Prostate gland (tissue), 2 donors: ENCODE measurements at regions of chr10 and their contacts with region 1.

Region 1: DNA sequence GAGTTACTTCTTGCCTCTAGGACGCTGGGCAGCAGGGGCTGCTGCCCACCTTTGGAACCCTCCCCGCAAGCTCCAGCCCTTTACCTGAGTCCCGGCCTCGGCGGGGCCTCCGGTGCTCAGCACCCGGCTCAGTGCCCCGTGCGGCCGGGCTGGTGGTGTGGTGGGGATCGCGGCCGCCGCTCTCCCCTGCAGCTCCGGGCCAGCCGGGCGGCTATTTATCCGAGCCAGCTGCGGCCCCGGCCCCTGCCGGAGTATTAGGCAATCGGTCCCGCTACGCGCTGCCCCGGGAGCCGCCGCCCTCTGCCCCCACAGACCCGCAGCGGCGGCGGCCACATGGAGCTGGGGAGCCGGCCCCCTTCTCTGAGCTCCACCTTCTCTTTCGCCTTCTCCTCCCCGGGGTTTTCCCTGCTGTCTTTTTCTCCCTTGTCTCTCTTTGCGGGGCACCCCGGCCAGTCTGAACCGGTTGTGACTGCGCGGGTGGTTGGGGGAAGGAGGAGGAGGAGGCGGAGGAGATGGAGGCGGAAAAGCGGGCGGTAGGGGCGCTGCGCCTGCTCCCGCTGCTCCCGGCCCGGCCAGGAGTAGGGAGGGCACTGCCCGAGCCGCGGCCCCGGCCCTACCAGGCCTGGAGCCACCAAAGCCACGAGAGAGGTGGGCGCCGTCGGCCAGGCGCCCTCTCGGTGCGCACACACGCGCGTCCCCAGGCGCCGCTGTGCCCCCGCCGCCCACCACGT is at the start of gene SLC16A9:
- DNase-seq: peak; percentile 56
- H3K4me3 ChIP-seq: peak within 1 kb of the TSS; percentile 47 to 51
- H3K27ac ChIP-seq: peak within 1 kb of the TSS; percentile 68 to 77
- H3K4me1 ChIP-seq: no peaks in the 10 kb centered on the region
- H3K27me3 ChIP-seq: no peaks in the 10 kb centered on the region
- CTCF ChIP-seq: peak in 3 of 4 experiments; percentile 41 to 46 (median 41)
- POLR2A ChIP-seq: no peak
- total RNA-seq, gene SLC16A9: 9.8 to 15.7 TPM

Region 2: GRCh38 chr10:59315465-59315864 is 394.1 kb before region 1 on chr10:
- intact Hi-C with region 1: no loop called
- DNase-seq: no peak
- H3K4me3 ChIP-seq: no peak overlapping the region
- H3K27ac ChIP-seq: peak overlapping the region in 1 of 2 donors; percentile 60
- H3K4me1 ChIP-seq: peaks cover 8% of the 10 kb centered on the region
- H3K27me3 ChIP-seq: no peaks in the 10 kb centered on the region
- CTCF ChIP-seq: no peak
- POLR2A ChIP-seq: no peak

Region 3: GRCh38 chr10:59808896-59809643 is 99.5 kb after region 1 on chr10:
- intact Hi-C with region 1: loop called (anchors 5 kb)
- DNase-seq: peak; percentile 64
- H3K4me3 ChIP-seq: no peak overlapping the region
- H3K27ac ChIP-seq: no peak overlapping the region
- H3K4me1 ChIP-seq: no peaks in the 10 kb centered on the region
- H3K27me3 ChIP-seq: no peaks in the 10 kb centered on the region
- CTCF ChIP-seq: peak in 3 of 4 experiments; percentile 63 to 69 (median 67)
- POLR2A ChIP-seq: no peak

Region 4: DNA sequence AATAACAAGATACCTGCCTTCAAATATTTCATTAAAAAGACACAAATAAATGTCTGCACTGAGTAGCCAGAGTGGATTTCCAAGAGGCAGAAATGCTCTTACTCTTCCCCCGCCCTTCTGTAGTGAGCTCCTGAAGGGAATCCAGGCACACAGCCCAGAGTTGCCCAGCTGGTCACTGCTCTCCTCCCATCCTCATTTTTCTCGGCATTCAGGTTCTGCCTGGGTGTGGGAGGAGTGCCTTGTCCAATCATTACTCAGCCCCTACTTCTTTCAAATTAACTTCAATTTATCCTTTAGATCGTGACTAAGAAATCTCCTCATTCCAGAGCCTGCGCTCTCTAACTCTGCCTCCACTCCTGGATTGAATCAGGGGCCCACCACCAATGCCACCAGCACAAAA is 184.6 kb after region 1 on chr10:
- intact Hi-C with region 1: loop called (anchors 10 kb)
- DNase-seq: peak; percentile 82
- H3K4me3 ChIP-seq: no peak overlapping the region
- H3K27ac ChIP-seq: peak overlapping the region; percentile 12 to 41
- H3K4me1 ChIP-seq: peaks cover 12% of the 10 kb centered on the region
- H3K27me3 ChIP-seq: no peaks in the 10 kb centered on the region
- CTCF ChIP-seq: no peak
- POLR2A ChIP-seq: no peak

Region 5: DNA sequence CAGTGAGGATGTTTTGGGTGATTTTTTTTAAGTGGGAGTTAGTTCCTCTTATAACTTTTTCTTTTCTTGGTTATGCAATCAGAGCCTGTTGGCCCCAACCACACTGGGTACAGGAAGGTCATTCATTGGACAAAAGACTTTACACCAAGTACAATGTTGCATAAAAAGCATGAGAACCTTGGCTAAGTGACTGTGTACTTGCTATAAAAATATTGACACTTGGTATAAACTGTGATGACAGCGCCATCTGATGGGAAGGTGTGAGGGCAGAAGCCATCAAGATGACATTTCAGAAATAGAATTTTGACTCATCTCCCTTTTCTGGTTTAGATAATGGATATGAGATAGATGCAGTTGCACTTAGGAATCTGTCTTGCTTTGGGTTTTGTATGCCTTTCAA is 323.2 kb after region 1 on chr10:
- intact Hi-C with region 1: no loop called
- DNase-seq: peak; percentile 71
- H3K4me3 ChIP-seq: no peak overlapping the region
- H3K27ac ChIP-seq: no peak overlapping the region
- H3K4me1 ChIP-seq: no peaks in the 10 kb centered on the region
- H3K27me3 ChIP-seq: no peaks in the 10 kb centered on the region
- CTCF ChIP-seq: peak; percentile 24 to 75 (median 67)
- POLR2A ChIP-seq: no peak

Region 6: DNA sequence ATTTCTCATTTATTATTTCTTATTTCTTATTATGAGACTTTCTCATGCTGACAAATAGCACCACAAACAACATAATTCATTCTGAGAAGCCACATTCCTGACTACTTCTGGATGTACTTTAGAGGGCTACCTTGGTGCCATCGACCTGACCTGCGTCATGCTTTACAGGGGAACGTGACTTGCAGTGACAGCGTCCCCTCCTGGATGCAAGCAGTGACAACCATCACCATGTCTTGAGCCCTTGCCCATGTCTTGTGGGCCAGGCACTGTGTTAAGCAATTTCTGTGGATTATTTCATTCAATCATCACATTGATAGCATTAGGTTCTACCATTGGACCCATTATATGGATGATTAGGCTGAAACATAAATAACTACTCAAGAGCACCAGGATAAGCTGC is 543.1 kb after region 1 on chr10:
- intact Hi-C with region 1: no loop called
- DNase-seq: no peak
- H3K4me3 ChIP-seq: no peak overlapping the region
- H3K27ac ChIP-seq: no peak overlapping the region
- H3K4me1 ChIP-seq: no peaks in the 10 kb centered on the region
- H3K27me3 ChIP-seq: no peaks in the 10 kb centered on the region
- CTCF ChIP-seq: no peak
- POLR2A ChIP-seq: no peak